Right ventricle myocardium inferior (tissue), 1 donor: ENCODE measurements at regions of chr11 and their contacts with region 1.

Region 1: GRCh38 chr11:80718669-80719646 is 1278.1 kb upstream of the TENM4 start:
- DNase-seq: no peak
- ATAC-seq: no peak

Region 2: GRCh38 chr11:80638296-80638695 is 80.7 kb before region 1 on chr11:
- intact Hi-C with region 1: no loop called
- DNase-seq: no peak
- ATAC-seq: no peak

Region 3: GRCh38 chr11:80746300-80746699 is 27.3 kb after region 1 on chr11:
- intact Hi-C with region 1: no loop called
- DNase-seq: no peak
- ATAC-seq: no peak

Region 4: GRCh38 chr11:80773919-80774318 is 55.0 kb after region 1 on chr11:
- intact Hi-C with region 1: no loop called
- DNase-seq: no peak
- ATAC-seq: no peak

Region 5: GRCh38 chr11:81070948-81071347 is 352.0 kb after region 1 on chr11:
- intact Hi-C with region 1: loop called (anchors 5 kb)
- DNase-seq: no peak
- ATAC-seq: no peak